PC-9 (cell line): ENCODE measurements at regions of chr10 and their contacts with region 1.

Region 1: GRCh38 chr10:28604567-28605536 is 71.9 kb downstream of the WAC start:
- DNase-seq: no peak
- H3K4me3 ChIP-seq: no peak overlapping the region
- H3K27ac ChIP-seq: no peak overlapping the region
- H3K4me1 ChIP-seq: no peaks in the 10 kb centered on the region
- H3K27me3 ChIP-seq: no peaks in the 10 kb centered on the region
- CTCF ChIP-seq: no peak

Region 2: DNA sequence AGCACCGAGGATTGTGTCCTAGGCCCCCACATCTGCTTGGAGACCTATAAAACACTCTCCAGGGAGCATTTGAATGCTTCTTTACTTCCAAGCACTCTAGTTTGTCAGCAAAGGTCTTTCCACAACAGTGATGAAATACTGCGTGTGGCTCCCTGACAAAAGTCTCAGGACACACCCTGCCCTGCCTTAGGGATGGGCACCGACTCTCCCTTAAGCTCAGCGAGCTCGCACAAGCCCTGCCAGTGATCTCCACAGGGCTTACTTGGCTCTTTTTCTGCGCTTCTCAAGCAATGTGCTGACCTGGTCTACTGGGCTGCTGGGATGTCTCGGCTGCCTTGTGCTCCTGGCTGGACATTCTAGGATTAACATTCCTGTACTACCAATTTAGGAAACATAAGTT is 217.7 kb before region 1 on chr10:
- CTCF ChIA-PET with region 1: interaction called, 21 read pairs
- POLR2A ChIA-PET with region 1: no interaction called
- intact Hi-C with region 1: no loop called
- DNase-seq: no peak
- H3K4me3 ChIP-seq: no peak overlapping the region
- H3K27ac ChIP-seq: no peak overlapping the region
- H3K4me1 ChIP-seq: no peaks in the 10 kb centered on the region
- H3K27me3 ChIP-seq: peaks cover 7% of the 10 kb centered on the region; the same call in 1 of the 2 replicates
- CTCF ChIP-seq: no peak

Region 3: DNA sequence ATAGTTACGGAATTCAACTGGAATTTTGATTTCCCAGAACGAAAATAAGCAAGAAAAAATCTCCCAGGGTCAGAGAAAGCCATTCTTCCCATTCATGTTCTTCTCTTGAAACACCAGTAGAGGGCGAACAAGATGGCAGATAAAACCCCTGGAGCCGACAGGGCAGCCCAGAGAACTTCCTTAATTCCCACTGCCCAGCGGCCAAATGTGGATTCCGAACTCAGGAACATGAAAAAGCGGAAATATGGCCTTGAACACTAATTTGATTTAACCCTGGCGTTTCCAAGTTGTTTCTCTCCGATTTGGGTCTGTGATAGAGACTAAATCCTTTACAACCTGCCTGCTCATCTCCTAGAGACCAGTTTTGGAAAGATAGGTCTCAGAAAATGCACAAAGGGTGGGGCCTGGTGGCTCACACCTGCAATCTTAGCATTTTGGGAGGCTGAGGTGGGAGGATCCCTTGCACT is 172.6 kb before region 1 on chr10:
- CTCF ChIA-PET with region 1: no interaction called
- POLR2A ChIA-PET with region 1: no interaction called
- intact Hi-C with region 1: loop called (anchors 5 kb)
- DNase-seq: peak; percentile 45 to 58
- H3K4me3 ChIP-seq: no peak overlapping the region
- H3K27ac ChIP-seq: no peak overlapping the region
- H3K4me1 ChIP-seq: no peaks in the 10 kb centered on the region
- H3K27me3 ChIP-seq: no peaks in the 10 kb centered on the region
- CTCF ChIP-seq: peak; percentile 75